Activated CD4-positive, alpha-beta T cell treated with anti-CD3 and anti-CD28 coated beads for 36 hours (primary cell): ENCODE measurements at regions of chr5 and their contacts with region 1.

Region 1: GRCh38 chr5:119267958-119268386 is 87.8 kb upstream of the TNFAIP8 start:
- DNase-seq: peak; percentile 93
- ATAC-seq: peak; percentile 75
- H3K4me3 Mint-ChIP-seq: peak overlapping the region; percentile 96
- H3K27ac Mint-ChIP-seq: peak overlapping the region; percentile 96
- H3K4me1 Mint-ChIP-seq: peaks cover 63% of the 10 kb centered on the region
- H3K27me3 Mint-ChIP-seq: no peaks in the 10 kb centered on the region

Region 2: DNA sequence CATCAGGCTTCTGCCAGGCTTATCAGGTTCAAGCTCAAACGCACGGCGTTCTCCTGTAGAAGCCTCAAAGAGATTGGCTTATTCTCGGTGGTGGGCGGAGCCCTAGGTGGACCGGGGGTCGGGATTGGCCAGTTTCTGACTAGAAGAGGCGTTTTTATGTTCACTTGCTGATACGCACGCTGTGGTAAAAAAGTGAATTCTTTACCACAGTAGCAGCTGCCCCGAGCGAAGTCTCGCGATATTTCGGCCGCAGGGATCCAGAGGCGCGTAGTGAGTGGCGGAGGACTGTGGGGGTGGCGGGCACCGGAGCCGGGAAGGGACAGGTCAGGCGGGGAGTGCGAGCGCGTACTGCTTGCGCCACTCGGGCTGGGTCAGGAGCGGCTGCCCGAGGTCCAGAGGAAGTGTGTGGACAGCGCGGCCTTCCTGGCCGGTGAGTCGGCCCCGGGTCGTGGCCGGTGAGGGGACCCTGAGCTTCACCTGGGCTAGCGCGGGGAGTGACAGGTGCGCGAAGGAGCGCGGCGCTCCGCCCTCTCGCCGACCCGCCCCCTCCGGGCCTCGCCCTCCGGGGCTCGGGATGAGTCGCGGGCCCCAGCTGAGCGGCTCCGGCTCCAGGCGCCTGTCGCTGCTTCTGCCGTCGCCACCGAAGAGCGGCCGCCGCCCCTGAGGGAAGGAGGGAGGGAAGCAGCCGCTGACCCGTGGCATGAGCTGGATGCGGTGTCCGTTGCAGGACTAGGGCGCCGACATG is 197.0 kb before region 1 on chr5 and contains the start of gene DMXL1:
- CTCF ChIA-PET with region 1: interaction called, 3 read pairs
- POLR2A ChIA-PET with region 1: interaction called, 6 read pairs
- intact Hi-C with region 1: loop called (anchors 1 kb)
- DNase-seq: peak; percentile 99
- ATAC-seq: peak; percentile 87
- H3K4me3 Mint-ChIP-seq: peak within 1 kb of the TSS; percentile 92
- H3K27ac Mint-ChIP-seq: peak within 1 kb of the TSS; percentile 96
- H3K4me1 Mint-ChIP-seq: peaks cover 35% of the 10 kb centered on the region
- H3K27me3 Mint-ChIP-seq: no peaks in the 10 kb centered on the region
- total RNA-seq, gene DMXL1: 23.5 to 31.1 TPM

Region 3: DNA sequence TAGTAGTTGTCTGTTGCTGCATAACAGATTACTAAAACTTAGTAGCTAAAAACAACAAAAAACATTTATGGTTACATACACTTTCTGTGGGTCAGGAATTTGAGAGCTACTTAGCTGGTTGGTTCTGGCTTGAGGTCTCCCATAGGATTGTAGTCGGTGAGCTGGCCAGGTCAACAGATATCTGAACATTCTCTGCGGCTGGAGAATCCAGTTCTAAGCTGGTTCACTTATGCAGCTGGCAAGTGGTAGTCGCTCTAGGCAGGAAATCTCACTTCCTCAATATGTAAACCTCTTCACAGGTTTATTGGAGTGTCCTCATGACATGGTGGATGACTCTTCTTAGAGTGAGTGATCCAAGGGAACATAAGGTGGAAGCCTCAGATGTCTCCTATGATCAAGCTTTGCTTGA is 22.2 kb after region 1 on chr5:
- CTCF ChIA-PET with region 1: interaction called, 10 read pairs
- POLR2A ChIA-PET with region 1: interaction called, 3 read pairs
- intact Hi-C with region 1: loop called in 1 of 2 experiments (anchors 1 kb)
- DNase-seq: no peak
- ATAC-seq: peak; percentile 55
- H3K4me3 Mint-ChIP-seq: peak overlapping the region; percentile 0
- H3K27ac Mint-ChIP-seq: peak overlapping the region; percentile 93
- H3K4me1 Mint-ChIP-seq: peaks cover 84% of the 10 kb centered on the region
- H3K27me3 Mint-ChIP-seq: no peaks in the 10 kb centered on the region

Region 4: GRCh38 chr5:119328753-119329602 is 61.0 kb after region 1 on chr5:
- CTCF ChIA-PET with region 1: interaction called, 17 read pairs
- POLR2A ChIA-PET with region 1: interaction called, 4 read pairs
- intact Hi-C with region 1: loop called in 1 of 2 experiments (anchors 1 kb)
- DNase-seq: peak; percentile 80
- ATAC-seq: peak; percentile 58
- H3K4me3 Mint-ChIP-seq: peak overlapping the region; percentile 45
- H3K27ac Mint-ChIP-seq: peak overlapping the region; percentile 98
- H3K4me1 Mint-ChIP-seq: peaks cover 96% of the 10 kb centered on the region
- H3K27me3 Mint-ChIP-seq: no peaks in the 10 kb centered on the region

Region 5: GRCh38 chr5:119397518-119398380 is 129.8 kb after region 1 on chr5:
- CTCF ChIA-PET with region 1: interaction called, 4 read pairs
- POLR2A ChIA-PET with region 1: interaction called, 7 read pairs
- intact Hi-C with region 1: loop called in 1 of 2 experiments (anchors 1 kb)
- DNase-seq: peak; percentile 43
- ATAC-seq: peak; percentile 70
- H3K4me3 Mint-ChIP-seq: peak overlapping the region; percentile 56
- H3K27ac Mint-ChIP-seq: peak overlapping the region; percentile 88
- H3K4me1 Mint-ChIP-seq: peaks cover 88% of the 10 kb centered on the region
- H3K27me3 Mint-ChIP-seq: no peaks in the 10 kb centered on the region